Caco-2 (cell line): ENCODE measurements at regions of chr1 and their contacts with region 1.

Region 1: GRCh38 chr1:39378377-39378776 is 113.1 kb upstream of the BMP8A start:
- DNase-seq: peak; percentile 73 to 74
- H3K4me3 ChIP-seq: no peak overlapping the region
- H3K4me3 Mint-ChIP-seq: no peak overlapping the region
- H3K27ac Mint-ChIP-seq: no peak overlapping the region
- H3K4me1 ChIP-seq: peaks cover 5% of the 10 kb centered on the region; the same call in 1 of the 2 replicates
- H3K4me1 Mint-ChIP-seq: peaks cover 7% of the 10 kb centered on the region
- H3K27me3 ChIP-seq: no peaks in the 10 kb centered on the region
- H3K27me3 Mint-ChIP-seq: no peaks in the 10 kb centered on the region
- CTCF ChIP-seq: peak; percentile 51 to 69

Region 2: GRCh38 chr1:39170731-39171667 is 207.4 kb before region 1 on chr1:
- CTCF ChIA-PET with region 1: no interaction called
- POLR2A ChIA-PET with region 1: no interaction called
- intact Hi-C with region 1: loop called (anchors 5 kb)
- DNase-seq: peak; percentile 41 to 48
- H3K4me3 ChIP-seq: no peak overlapping the region
- H3K4me3 Mint-ChIP-seq: peak overlapping the region; percentile 23
- H3K27ac Mint-ChIP-seq: peak overlapping the region; percentile 50
- H3K4me1 ChIP-seq: peaks cover 43% of the 10 kb centered on the region
- H3K4me1 Mint-ChIP-seq: peaks cover 29% of the 10 kb centered on the region
- H3K27me3 ChIP-seq: no peaks in the 10 kb centered on the region
- H3K27me3 Mint-ChIP-seq: no peaks in the 10 kb centered on the region
- CTCF ChIP-seq: no peak

Region 3: GRCh38 chr1:39344394-39345154 is 33.8 kb before region 1 on chr1:
- CTCF ChIA-PET with region 1: no interaction called
- POLR2A ChIA-PET with region 1: no interaction called
- intact Hi-C with region 1: no loop called
- DNase-seq: no peak
- H3K4me3 ChIP-seq: no peak overlapping the region
- H3K4me3 Mint-ChIP-seq: no peak overlapping the region
- H3K27ac Mint-ChIP-seq: no peak overlapping the region
- H3K4me1 ChIP-seq: no peaks in the 10 kb centered on the region
- H3K4me1 Mint-ChIP-seq: no peaks in the 10 kb centered on the region
- H3K27me3 ChIP-seq: no peaks in the 10 kb centered on the region
- H3K27me3 Mint-ChIP-seq: no peaks in the 10 kb centered on the region
- CTCF ChIP-seq: no peak